ENCODE measurements at regions of chr2 and their contacts with region 1.

Region 1: GRCh38 chr2:200811336-200812121 is at the start of gene BZW1:
- DNase-seq: peak; percentile 99
- H3K4me3 Mint-ChIP-seq: peak within 1 kb of the TSS; percentile 99
- H3K27ac Mint-ChIP-seq: peak within 1 kb of the TSS; percentile 100
- H3K4me1 Mint-ChIP-seq: peaks cover 46% of the 10 kb centered on the region
- H3K27me3 Mint-ChIP-seq: no peaks in the 10 kb centered on the region
- total RNA-seq, gene BZW1: 423 to 442 TPM

Region 2: DNA sequence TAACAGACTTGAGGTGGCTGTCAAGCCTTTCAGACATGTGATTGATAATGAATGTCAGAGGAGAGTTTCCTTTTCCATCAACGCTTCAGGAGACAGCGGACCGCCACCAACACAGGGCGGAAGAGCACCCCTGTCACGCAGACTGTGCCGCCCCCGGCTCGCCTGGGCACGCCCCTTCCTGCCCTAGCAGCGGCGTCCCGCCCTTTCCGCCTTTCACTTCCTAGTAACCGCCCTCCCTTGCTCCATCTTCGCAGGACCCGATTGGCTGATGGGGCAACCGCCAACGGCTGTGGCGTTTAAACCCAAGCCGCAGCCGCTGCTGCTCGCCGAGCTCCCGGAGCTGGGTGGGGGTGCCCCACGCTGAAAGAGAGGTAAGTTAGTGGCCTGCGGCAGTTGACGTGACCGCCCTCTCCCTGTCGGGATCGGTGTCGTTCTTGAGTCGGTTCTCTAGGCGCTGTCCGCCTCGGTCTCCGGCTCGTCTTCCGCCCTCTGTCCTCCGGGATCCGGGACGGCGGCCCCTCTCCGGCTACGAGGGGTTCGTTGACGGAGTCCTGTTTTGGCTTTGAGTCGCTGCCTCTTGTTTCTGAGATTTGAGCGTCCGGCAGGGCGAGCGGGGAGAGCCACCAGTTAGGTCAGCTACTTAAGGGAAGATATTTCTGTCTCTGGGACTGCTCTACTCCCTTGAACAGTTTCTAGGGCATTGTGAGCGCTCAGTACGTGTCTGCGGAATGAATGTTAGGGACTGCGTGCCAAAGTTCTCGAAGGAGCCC is 285.5 kb before region 1 on chr2 and contains the start of gene SGO2:
- CTCF ChIA-PET with region 1: no interaction called
- intact Hi-C with region 1: loop called (anchors 1 kb)
- DNase-seq: peak; percentile 98
- H3K4me3 Mint-ChIP-seq: peak within 1 kb of the TSS; percentile 90
- H3K27ac Mint-ChIP-seq: peak within 1 kb of the TSS; percentile 84
- H3K4me1 Mint-ChIP-seq: peaks cover 17% of the 10 kb centered on the region
- H3K27me3 Mint-ChIP-seq: no peaks in the 10 kb centered on the region
- total RNA-seq, gene SGO2: 39.7 to 40.0 TPM

Region 3: DNA sequence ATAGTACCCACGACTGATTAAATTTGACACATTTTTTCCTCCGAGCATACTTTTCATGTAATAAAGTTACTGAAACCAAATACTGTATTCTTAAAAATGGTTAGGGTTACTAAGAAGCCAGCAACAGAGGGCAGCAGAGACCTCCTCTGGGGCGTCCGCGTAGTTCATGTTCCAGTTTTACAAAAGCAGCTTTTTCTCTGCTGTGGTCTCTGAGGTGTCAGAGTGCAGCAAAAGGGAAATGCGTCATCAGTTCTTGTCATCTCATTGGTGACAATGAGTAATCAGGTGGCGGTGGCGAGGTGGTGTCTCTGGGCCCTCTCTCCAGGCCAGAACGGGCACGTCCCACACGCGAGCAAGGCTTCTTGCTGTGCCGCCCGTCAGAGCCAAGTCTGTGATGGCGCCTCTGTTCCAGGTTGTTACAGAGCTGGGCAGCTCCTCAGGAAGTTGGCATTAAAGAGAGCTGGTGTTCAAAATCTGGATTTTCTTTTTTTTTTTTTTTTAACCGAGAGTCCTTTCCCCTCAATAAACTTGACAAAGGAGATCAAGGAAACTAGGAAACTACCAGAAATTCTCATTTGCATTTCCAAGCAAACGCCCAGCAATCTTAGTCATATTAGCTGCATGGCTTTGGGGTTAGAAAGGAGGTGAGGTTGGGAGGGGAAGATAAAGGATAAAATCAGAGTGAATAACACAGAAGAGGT is 98.4 kb before region 1 on chr2:
- CTCF ChIA-PET with region 1: interaction called, 17 read pairs
- intact Hi-C with region 1: loop called (anchors 1 kb)
- DNase-seq: peak; percentile 96
- H3K4me3 Mint-ChIP-seq: peak overlapping the region; percentile 77
- H3K27ac Mint-ChIP-seq: peak overlapping the region; percentile 100
- H3K4me1 Mint-ChIP-seq: peaks cover 32% of the 10 kb centered on the region
- H3K27me3 Mint-ChIP-seq: no peaks in the 10 kb centered on the region

Region 4: DNA sequence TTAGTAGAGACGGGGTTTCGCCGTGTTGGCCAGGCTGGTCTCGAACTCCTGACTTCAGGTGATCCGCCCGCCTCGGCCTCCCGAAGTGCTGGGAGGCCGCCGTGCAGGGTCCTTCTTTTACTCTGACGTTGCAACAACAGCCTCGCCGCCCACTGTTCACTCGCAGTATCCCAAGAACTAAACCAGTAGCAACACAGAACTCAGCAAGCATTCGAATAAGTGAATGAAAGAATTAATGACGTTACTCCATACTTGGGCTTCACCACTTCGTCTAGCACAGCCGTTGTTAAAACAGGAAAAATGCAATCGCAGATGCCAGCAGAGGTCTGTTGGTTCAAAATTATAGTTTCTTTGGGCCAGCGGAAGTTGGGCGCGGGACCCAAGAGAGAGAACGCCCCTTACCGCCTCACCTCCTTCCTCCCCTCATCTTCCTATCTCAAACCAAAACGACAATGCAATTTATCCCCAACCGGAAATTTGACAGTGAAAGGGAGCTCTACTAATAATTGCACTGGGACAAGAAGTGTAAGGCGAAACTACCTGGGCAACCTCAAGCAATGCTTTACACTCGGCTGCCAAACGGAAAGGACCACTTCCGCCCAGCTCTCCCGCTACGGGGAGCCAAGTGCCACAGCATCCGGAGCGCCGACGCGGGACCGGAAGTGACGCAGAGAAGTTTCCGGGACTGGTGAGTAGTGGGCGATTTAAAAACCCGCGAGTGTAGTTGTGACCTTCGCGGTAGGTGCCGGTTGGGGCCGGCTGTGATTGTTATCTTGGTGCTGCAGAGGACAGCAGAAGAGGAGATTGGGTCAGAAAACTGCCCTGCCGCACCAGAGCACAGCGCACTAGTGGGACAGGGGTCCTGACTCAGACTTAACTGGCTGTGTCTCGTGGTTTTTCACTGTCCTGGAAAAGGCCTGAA is 77.4 kb after region 1 on chr2 and contains the starts of genes NIF3L1 and PPIL3:
- CTCF ChIA-PET with region 1: no interaction called
- intact Hi-C with region 1: loop called (anchors 1 kb)
- DNase-seq: peak; percentile 99
- H3K4me3 Mint-ChIP-seq: peak within 1 kb of the TSS; percentile 88
- H3K27ac Mint-ChIP-seq: peak within 1 kb of the TSS; percentile 97
- H3K4me1 Mint-ChIP-seq: peaks cover 50% of the 10 kb centered on the region
- H3K27me3 Mint-ChIP-seq: no peaks in the 10 kb centered on the region
- total RNA-seq, gene NIF3L1: 31.6 to 33.3 TPM
- total RNA-seq, gene PPIL3: 81.3 to 82.2 TPM

Region 5: GRCh38 chr2:201130524-201131186 is 319.1 kb after region 1 on chr2:
- CTCF ChIA-PET with region 1: no interaction called
- intact Hi-C with region 1: loop called (anchors 1 kb)
- DNase-seq: peak; percentile 68
- H3K4me3 Mint-ChIP-seq: peak overlapping the region; percentile 76
- H3K27ac Mint-ChIP-seq: peak overlapping the region; percentile 96
- H3K4me1 Mint-ChIP-seq: peaks cover 56% of the 10 kb centered on the region
- H3K27me3 Mint-ChIP-seq: no peaks in the 10 kb centered on the region

Region 6: GRCh38 chr2:202278944-202279343 is 1467.4 kb after region 1 on chr2:
- CTCF ChIA-PET with region 1: no interaction called
- intact Hi-C with region 1: loop called (anchors 5 kb)
- DNase-seq: no peak
- H3K4me3 Mint-ChIP-seq: no peak overlapping the region
- H3K27ac Mint-ChIP-seq: peak overlapping the region; percentile 92
- H3K4me1 Mint-ChIP-seq: peaks cover 51% of the 10 kb centered on the region
- H3K27me3 Mint-ChIP-seq: no peaks in the 10 kb centered on the region